Endothelial cell of umbilical vein (primary cell): ENCODE measurements at regions of chr1 and their contacts with region 1.

Region 1: GRCh38 chr1:21334214-21335087 is 44.2 kb upstream of the ECE1 start:
- DNase-seq: peak; percentile 75
- H3K4me3 ChIP-seq: peak overlapping the region in 1 of 3 experiments; percentile 10
- H3K27ac ChIP-seq: peak overlapping the region; percentile 81
- H3K4me1 ChIP-seq: peaks cover 73% of the 10 kb centered on the region
- H3K27me3 ChIP-seq: no peaks in the 10 kb centered on the region
- CTCF ChIP-seq: peak; percentile 82 to 89
- POLR2A ChIP-seq: peak; percentile 43

Region 2: DNA sequence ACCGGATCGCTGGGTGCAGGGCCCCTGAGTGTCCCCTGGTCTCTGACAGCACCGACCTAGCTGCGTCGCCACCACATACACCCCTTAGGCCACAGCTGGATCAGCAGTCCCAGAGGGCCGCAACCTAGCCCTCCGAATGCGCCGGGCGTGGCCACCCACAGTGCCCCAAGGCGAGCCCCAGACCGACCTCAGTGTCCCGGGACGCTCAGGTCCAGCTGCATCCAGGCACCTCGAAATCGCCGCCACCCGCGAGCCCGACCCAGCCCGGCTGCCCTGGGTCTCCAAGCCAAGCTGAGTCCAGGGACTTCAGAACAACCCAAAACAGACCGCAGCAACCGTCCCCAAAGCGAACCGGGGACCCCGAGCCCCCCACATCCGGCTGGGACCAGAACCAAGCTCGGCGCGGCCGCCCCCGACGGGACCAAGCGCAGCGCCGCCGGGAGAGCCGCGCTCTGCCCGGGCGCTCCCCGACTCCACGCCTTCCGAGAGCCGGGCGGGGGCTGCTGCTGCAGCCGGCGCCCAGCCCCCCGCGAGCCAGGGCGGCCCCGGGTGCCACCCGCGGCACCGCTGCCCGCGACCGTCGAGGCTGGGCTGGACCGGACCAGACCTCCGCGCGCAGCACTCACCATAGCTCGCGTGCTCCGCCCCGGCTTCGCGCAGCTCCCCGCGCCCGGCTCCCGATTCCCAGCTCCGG is 10.4 kb after region 1 on chr1:
- CTCF ChIA-PET with region 1: interaction called, 12 read pairs
- POLR2A ChIA-PET with region 1: no interaction called
- dilution Hi-C with region 1: no loop called
- intact Hi-C with region 1: no loop called
- DNase-seq: no peak
- H3K4me3 ChIP-seq: peak overlapping the region; percentile 40 to 82 (median 66)
- H3K27ac ChIP-seq: peak overlapping the region; percentile 14
- H3K4me1 ChIP-seq: peaks cover 38% of the 10 kb centered on the region
- H3K27me3 ChIP-seq: no peaks in the 10 kb centered on the region
- CTCF ChIP-seq: no peak
- POLR2A ChIP-seq: no peak